Common myeloid progenitor, CD34-positive (primary cell): ENCODE measurements at regions of chr6 and their contacts with region 1.

Region 1: GRCh38 chr6:10429638-10430427 is 15.0 kb upstream of the TFAP2A start:
- DNase-seq: peak in 2 of 3 donors; percentile 47 to 62
- H3K4me3 ChIP-seq: no peak overlapping the region
- H3K27ac ChIP-seq: no peak overlapping the region
- H3K4me1 ChIP-seq: peaks cover 3 to 24% (median 14%) of the 10 kb centered on the region in 4 experiments
- H3K27me3 ChIP-seq: peaks cover 26 to 66% (median 40%) of the 10 kb centered on the region in 5 experiments

Region 2: DNA sequence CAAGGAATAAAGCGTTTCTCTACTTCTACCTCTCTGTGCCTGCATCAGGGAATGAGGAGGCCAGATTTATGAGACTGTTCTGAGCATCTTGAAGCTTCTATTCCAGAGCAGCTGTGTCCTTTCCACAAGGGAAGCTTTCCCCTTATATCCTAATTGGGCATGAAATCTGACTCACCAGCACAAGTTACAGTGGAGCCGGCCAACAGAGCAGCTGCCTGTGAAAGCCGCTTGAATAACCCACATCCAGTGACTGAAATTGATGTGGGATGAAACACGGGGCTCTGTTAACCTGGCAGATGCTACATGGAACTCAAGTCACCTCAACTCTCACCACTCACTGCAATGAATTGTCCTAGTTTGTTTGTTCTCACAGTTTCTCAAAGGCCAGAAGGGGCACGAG is 415.3 kb before region 1 on chr6:
- CTCF ChIA-PET with region 1: no interaction called
- POLR2A ChIA-PET with region 1: no interaction called
- DNase-seq: no peak
- H3K4me3 ChIP-seq: no peak overlapping the region
- H3K27ac ChIP-seq: no peak overlapping the region
- H3K4me1 ChIP-seq: no peaks in the 10 kb centered on the region
- H3K27me3 ChIP-seq: no peaks in the 10 kb centered on the region

Region 3: GRCh38 chr6:10381133-10381829 is 48.6 kb before region 1 on chr6:
- CTCF ChIA-PET with region 1: interaction called, 20 read pairs
- POLR2A ChIA-PET with region 1: no interaction called
- DNase-seq: peak; percentile 39 to 45 (median 43)
- H3K4me3 ChIP-seq: peak overlapping the region in 2 of 7 experiments; percentile 10 to 46
- H3K27ac ChIP-seq: no peak overlapping the region
- H3K4me1 ChIP-seq: peaks cover 0 to 21% (median 8%) of the 10 kb centered on the region in 4 experiments
- H3K27me3 ChIP-seq: peaks cover 23 to 93% (median 47%) of the 10 kb centered on the region in 5 experiments

Region 4: DNA sequence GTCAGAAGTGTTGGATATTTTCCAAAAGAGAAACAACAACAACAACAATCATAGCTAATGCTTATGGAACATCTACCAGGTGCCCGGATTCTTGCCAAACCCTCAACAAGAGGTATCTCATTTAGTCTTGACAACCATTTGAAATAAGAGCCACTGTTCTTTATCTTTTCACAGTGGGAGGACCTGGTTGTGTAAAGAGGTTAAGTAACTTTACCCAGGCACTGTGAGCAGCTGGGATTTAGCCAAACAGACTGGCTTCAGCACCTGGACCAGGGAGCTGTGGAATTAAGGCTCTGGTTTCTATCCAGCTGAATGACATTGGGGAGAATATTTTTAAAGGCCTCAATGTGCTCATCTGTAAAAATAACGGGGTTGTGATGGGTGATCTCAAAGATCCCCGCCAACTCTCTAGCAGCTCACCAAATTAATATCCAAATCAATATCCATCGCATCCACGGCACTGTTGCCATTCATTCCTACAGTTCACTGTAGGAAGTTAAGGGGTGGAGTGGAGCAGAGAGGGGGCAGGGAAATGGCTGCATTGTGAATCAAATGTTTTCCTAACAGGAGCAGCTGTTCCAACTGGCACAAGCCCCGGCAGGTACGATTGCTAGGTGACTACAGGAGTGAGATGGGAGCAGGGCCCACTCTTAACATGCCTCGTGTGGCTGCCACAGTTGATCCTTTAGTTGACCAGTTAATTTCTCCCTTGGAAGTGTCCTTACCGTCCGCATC is 153.1 kb after region 1 on chr6:
- CTCF ChIA-PET with region 1: no interaction called
- POLR2A ChIA-PET with region 1: no interaction called
- DNase-seq: no peak
- H3K4me3 ChIP-seq: no peak overlapping the region
- H3K27ac ChIP-seq: no peak overlapping the region
- H3K4me1 ChIP-seq: peaks cover 0 to 21% (median 17%) of the 10 kb centered on the region in 4 experiments
- H3K27me3 ChIP-seq: no peaks in the 10 kb centered on the region